OCI-LY7 (cell line): ENCODE measurements at regions of chr9 and their contacts with region 1.

Region 1: GRCh38 chr9:102414350-102414749 is 580.8 kb upstream of the CYLC2 start:
- DNase-seq: no peak
- H3K4me3 ChIP-seq: no peak overlapping the region
- H3K27ac ChIP-seq: no peak overlapping the region
- H3K4me1 ChIP-seq: no peaks in the 10 kb centered on the region
- CTCF ChIP-seq: no peak

Region 2: GRCh38 chr9:102434545-102434944 is 20.2 kb after region 1 on chr9:
- CTCF ChIA-PET with region 1: no interaction called
- POLR2A ChIA-PET with region 1: interaction called, 11 read pairs
- intact Hi-C with region 1: no loop called
- DNase-seq: no peak
- H3K4me3 ChIP-seq: no peak overlapping the region
- H3K27ac ChIP-seq: no peak overlapping the region
- H3K4me1 ChIP-seq: no peaks in the 10 kb centered on the region
- CTCF ChIP-seq: no peak

Region 3: GRCh38 chr9:102875674-102876073 is 461.3 kb after region 1 on chr9:
- CTCF ChIA-PET with region 1: no interaction called
- POLR2A ChIA-PET with region 1: no interaction called
- intact Hi-C with region 1: no loop called
- DNase-seq: no peak
- H3K4me3 ChIP-seq: no peak overlapping the region
- H3K27ac ChIP-seq: no peak overlapping the region
- H3K4me1 ChIP-seq: no peaks in the 10 kb centered on the region
- CTCF ChIP-seq: no peak